ENCODE measurements at regions of chr2 and their contacts with region 1.

Region 1: DNA sequence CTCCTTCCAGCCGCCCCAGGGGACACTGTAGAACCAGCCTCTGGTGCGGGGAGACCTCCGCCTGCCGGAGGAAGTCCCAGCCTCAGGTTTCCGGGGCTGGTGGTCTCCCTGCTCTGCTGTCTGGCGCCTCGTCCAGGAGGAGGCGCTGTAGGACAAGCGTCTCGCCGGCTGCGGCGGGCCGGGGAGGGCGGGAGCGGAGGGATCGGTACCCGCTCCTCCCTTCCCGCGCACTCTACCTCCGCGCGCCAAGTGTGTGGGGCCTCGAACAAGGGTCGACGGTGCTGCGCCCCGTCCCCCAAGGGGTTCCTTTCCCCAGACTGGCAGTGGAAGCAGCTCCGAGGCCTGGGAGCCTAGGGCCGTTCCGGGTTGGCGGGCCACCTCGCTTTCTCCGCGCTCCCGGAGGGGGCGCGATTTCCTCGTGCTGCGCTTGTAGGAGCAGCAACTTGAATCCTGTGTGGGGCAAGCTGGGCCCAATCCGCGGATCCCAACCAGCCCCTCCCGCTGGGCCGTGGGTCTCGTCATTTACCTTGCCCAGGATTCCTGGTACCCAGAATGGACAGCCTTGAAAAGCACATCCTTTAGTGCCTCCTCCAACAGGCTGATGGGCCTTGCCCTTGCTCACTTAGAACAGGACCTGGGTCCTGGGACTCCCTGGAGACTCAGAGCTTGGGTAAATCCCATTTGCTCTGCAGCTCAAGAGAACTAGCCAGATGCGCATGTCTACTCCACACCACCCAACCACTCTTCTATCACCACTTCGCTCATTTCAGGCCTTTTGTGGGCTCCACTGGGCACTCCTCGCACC is 10.6 kb upstream of the HOXD4 start:
- DNase-seq: peak; percentile 96
- H3K4me3 ChIP-seq: peak overlapping the region; percentile 61 to 79
- H3K27ac ChIP-seq: peak overlapping the region; percentile 58 to 63
- H3K4me1 ChIP-seq: peaks cover 5 to 27% of the 10 kb centered on the region in 2 experiments; a peak in 2 of 4 replicates
- H3K27me3 ChIP-seq: no peaks in the 10 kb centered on the region
- CTCF ChIP-seq: peak; percentile 87
- EP300 ChIP-seq: no peak
- RAD21 ChIP-seq: peak; percentile 80

Region 2: DNA sequence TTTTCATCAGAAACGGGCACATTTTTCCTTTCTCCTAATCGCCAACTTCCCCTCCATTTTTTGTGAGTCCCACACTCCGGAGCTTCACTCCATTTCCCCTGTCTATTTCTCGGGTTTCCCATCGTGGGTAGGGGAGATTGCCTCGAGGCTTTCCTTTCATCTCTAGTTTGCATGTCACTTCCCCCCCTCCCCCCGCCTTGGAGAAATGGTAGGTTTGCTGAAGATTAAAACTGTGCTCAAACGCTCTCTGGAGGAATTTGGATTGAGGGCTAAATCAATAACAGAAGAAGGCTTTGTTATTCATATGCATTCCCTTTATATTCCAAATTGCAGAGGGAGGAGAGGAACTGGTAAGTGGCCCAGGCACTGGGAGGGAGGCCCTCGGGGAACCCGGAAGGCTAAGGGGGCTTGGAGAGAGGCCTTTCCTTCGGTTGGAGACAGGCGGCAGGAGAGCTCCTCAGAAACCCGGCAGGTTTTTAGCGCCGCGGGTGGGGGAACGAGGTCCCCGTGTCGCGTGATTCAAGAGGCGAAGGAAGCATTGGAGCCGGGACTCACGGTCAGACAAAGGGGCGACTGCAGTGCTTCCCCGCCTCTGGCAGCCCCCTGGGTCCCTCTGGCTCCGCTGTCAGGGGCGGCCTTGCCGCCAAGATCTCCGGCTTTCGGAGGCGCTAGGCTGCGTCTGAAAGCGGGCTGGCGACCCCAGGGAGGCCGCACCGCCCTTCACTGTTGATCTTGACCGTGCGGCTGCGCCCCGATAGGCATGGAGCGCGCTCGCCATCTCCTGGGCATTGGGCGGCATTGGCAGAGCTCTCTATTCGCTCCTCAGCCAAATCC is 43.5 kb before region 1 on chr2:
- CTCF ChIA-PET with region 1: no interaction called
- POLR2A ChIA-PET with region 1: no interaction called
- DNase-seq: peak; percentile 92
- H3K4me3 ChIP-seq: peak overlapping the region; percentile 48 to 59
- H3K27ac ChIP-seq: no peak overlapping the region
- H3K4me1 ChIP-seq: peaks cover 0 to 25% of the 10 kb centered on the region in 2 experiments; a peak in 2 of 4 replicates
- H3K27me3 ChIP-seq: peaks cover 94% of the 10 kb centered on the region
- CTCF ChIP-seq: peak; percentile 80
- EP300 ChIP-seq: no peak
- RAD21 ChIP-seq: peak; percentile 85

Region 3: GRCh38 chr2:176151442-176152369 is 11.0 kb after region 1 on chr2 and contains the start of gene HOXD4:
- CTCF ChIA-PET with region 1: interaction called, 53 read pairs
- POLR2A ChIA-PET with region 1: interaction called, 9 read pairs
- DNase-seq: no peak
- H3K4me3 ChIP-seq: no peak within 1 kb of the TSS
- H3K27ac ChIP-seq: no peak within 1 kb of the TSS
- H3K4me1 ChIP-seq: peaks cover 0 to 11% of the 10 kb centered on the region in 2 experiments; a peak in 1 of 4 replicates
- H3K27me3 ChIP-seq: no peaks in the 10 kb centered on the region
- CTCF ChIP-seq: no peak
- EP300 ChIP-seq: no peak
- RAD21 ChIP-seq: no peak
- polyA plus RNA-seq, gene HOXD4: 1.0 and 1.6 TPM in 2 replicates

Region 4: DNA sequence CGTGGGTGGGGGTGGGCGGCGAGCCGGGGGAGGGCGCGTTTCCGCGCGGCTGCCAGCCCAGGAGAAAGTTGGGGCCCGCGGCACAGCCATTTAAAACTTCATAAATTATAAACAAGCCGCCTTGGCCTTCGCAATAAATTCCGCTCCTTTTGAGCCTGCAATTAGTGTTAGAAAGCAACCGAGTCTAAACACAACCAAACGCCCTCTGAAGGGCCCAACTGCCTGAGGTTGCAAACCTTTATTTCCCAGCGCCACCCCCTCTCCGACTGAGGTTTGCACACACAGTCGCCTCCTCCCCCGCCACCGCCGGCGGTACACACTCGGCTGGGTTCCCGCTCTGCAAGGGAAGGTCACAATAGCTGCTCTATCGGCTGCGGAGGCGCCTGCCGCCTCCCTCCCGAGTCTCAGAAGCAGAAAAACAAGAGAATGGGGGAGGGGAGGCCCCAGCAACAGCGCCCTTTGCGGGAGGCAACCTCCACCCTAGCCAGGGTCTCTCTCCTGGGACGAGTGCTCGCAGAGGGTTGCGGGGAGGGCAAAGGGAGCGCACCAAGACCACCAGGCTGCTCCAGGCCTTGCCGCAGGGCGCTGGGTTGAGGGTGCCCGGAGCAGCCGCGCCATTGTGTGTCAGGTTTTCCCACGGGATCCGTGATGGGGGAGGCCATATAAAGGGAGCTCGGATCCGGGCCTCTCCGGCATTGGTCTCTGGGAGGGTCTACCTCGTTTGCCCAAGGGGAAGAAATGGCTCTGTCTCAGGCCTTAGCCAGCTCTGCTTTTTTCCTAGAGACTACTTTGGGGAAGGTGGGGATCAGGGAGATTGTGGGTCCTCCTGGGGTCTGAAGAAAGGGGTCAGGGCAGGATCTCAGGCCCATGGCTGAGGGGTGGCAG is 34.4 kb after region 1 on chr2:
- CTCF ChIA-PET with region 1: interaction called, 18 read pairs
- POLR2A ChIA-PET with region 1: no interaction called
- DNase-seq: no peak
- H3K4me3 ChIP-seq: no peak overlapping the region
- H3K27ac ChIP-seq: no peak overlapping the region
- H3K4me1 ChIP-seq: peaks cover 0 to 8% of the 10 kb centered on the region in 2 experiments; a peak in 2 of 4 replicates
- H3K27me3 ChIP-seq: no peaks in the 10 kb centered on the region
- CTCF ChIP-seq: no peak
- EP300 ChIP-seq: no peak
- RAD21 ChIP-seq: no peak

Region 5: DNA sequence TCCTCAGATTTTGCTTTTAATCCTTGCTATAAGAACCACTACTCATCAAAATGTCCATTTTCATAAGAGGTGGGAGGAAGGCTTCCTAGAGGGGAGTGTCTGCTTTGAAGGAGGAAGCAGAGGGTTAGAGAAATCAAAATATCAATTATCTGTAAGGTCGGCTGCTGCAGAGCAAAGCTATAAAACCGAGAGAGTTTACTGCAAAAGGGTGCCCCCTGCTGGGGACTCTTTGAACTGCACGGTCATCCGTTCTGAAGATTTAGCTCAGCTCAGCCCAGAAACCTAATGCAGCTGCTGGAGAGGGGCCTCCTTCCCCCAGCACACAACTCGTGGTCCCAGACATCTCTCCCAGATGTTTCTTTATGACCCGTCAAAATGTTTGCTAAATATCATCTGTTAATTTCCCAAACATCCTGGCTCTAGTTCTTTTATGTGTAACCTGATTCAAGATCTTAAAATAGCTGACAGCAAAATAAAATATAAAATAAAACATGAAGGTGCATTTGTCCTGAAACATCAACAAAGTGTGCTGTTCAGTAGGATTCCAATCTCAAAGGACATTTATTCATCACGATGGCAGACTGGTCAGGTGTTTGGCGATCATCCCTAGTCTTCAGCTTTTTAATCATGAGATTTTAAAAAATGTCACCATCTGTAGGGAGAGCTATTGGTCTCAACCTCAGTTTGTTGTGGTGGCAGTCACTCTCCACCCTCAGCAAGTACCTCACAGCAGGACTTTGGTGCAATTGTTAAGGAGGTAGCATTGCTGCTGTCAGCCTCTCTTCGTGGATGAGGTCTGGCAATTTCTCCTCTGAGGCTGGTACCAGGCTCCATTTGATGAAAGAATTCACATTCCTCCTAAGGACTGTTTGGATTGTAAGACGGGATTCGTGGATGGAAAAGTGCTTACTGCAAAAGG is 314.4 kb after region 1 on chr2:
- CTCF ChIA-PET with region 1: interaction called, 154 read pairs
- POLR2A ChIA-PET with region 1: interaction called, 11 read pairs
- DNase-seq: peak; percentile 64
- H3K4me3 ChIP-seq: no peak overlapping the region; a peak in 1 of 4 replicates
- H3K27ac ChIP-seq: peak overlapping the region in 1 of 2 experiments; percentile 78; a peak in 2 of 4 replicates
- H3K4me1 ChIP-seq: peaks cover 0 to 16% of the 10 kb centered on the region in 2 experiments; a peak in 2 of 4 replicates
- H3K27me3 ChIP-seq: no peaks in the 10 kb centered on the region
- CTCF ChIP-seq: peak; percentile 94
- EP300 ChIP-seq: no peak
- RAD21 ChIP-seq: peak; percentile 88

Region 6: DNA sequence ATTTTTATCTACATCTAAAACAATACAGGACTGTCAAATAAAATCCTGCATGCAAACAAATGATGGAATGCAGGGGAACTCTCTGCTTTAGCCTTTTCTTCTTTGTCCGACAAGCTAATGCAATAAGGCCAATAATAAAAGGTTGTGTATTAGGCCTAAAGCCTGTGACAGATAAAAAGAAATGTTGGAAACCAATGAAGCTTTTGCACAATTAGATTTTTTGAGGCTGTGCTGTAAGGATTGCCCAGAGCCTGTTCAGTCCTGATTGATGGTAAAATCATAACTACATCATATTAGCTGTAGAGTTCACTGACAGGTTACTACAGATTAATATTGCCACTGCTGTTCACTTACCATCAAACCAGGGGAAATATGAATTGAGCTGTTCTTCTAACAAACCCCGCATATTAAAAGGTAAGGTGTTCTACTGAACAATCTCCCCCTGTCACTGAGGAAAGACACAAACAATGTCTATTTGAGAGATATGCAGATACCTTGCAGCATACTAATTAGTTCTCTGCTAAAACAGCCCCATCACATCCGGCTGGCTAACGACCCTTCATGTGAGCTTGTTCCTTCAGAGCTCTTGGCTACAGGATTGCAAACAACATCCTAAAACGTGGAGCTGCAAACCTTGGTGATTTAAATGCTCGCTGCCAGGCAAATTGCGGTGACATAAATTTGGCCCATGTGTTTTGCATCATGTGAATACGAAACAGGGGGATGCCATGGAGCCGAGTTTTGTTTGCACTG is 433.9 kb after region 1 on chr2:
- CTCF ChIA-PET with region 1: interaction called, 52 read pairs
- POLR2A ChIA-PET with region 1: interaction called, 16 read pairs
- DNase-seq: peak; percentile 59
- H3K4me3 ChIP-seq: no peak overlapping the region; a peak in 1 of 4 replicates
- H3K27ac ChIP-seq: peak overlapping the region; percentile 39 to 99; a peak in 3 of 4 replicates
- H3K4me1 ChIP-seq: peaks cover 7 to 45% of the 10 kb centered on the region in 2 experiments
- H3K27me3 ChIP-seq: no peaks in the 10 kb centered on the region
- CTCF ChIP-seq: no peak
- EP300 ChIP-seq: peak; percentile 83 to 100
- RAD21 ChIP-seq: peak; percentile 42

Region 7: GRCh38 chr2:176589825-176590440 is 449.2 kb after region 1 on chr2:
- CTCF ChIA-PET with region 1: interaction called, 10 read pairs
- POLR2A ChIA-PET with region 1: no interaction called
- DNase-seq: no peak
- H3K4me3 ChIP-seq: no peak overlapping the region
- H3K27ac ChIP-seq: peak overlapping the region in 1 of 2 experiments; percentile 62; a peak in 2 of 4 replicates
- H3K4me1 ChIP-seq: peaks cover 0 to 12% of the 10 kb centered on the region in 2 experiments; a peak in 2 of 4 replicates
- H3K27me3 ChIP-seq: no peaks in the 10 kb centered on the region
- CTCF ChIP-seq: no peak
- EP300 ChIP-seq: peak in 1 of 2 experiments; percentile 58; a peak in 2 of 4 replicates
- RAD21 ChIP-seq: peak; percentile 51